Transverse colon (tissue), 4 donors: ENCODE measurements at regions of chr10 and their contacts with region 1.

Region 1: GRCh38 chr10:82850191-82850590 is 975.2 kb downstream of the NRG3 start:
- DNase-seq: no peak
- H3K4me3 ChIP-seq: no peak overlapping the region
- H3K27ac ChIP-seq: no peak overlapping the region
- H3K4me1 ChIP-seq: no peaks in the 10 kb centered on the region
- H3K27me3 ChIP-seq: no peaks in the 10 kb centered on the region
- CTCF ChIP-seq: no peak
- EP300 ChIP-seq: no peak
- POLR2A ChIP-seq: no peak

Region 2: GRCh38 chr10:82653244-82654155 is 196.7 kb before region 1 on chr10:
- in situ Hi-C with region 1: no loop called
- intact Hi-C with region 1: no loop called
- DNase-seq: no peak
- H3K4me3 ChIP-seq: no peak overlapping the region
- H3K27ac ChIP-seq: no peak overlapping the region
- H3K4me1 ChIP-seq: no peaks in the 10 kb centered on the region
- H3K27me3 ChIP-seq: no peaks in the 10 kb centered on the region
- CTCF ChIP-seq: no peak
- EP300 ChIP-seq: no peak
- POLR2A ChIP-seq: no peak

Region 3: GRCh38 chr10:82874671-82875070 is 24.5 kb after region 1 on chr10:
- in situ Hi-C with region 1: no loop called
- intact Hi-C with region 1: loop called (anchors 1 kb)
- DNase-seq: no peak
- H3K4me3 ChIP-seq: no peak overlapping the region
- H3K27ac ChIP-seq: no peak overlapping the region
- H3K4me1 ChIP-seq: no peaks in the 10 kb centered on the region
- H3K27me3 ChIP-seq: no peaks in the 10 kb centered on the region
- CTCF ChIP-seq: no peak
- EP300 ChIP-seq: no peak
- POLR2A ChIP-seq: no peak